ENCODE measurements at regions of chr11 and their contacts with region 1.

Region 1: DNA sequence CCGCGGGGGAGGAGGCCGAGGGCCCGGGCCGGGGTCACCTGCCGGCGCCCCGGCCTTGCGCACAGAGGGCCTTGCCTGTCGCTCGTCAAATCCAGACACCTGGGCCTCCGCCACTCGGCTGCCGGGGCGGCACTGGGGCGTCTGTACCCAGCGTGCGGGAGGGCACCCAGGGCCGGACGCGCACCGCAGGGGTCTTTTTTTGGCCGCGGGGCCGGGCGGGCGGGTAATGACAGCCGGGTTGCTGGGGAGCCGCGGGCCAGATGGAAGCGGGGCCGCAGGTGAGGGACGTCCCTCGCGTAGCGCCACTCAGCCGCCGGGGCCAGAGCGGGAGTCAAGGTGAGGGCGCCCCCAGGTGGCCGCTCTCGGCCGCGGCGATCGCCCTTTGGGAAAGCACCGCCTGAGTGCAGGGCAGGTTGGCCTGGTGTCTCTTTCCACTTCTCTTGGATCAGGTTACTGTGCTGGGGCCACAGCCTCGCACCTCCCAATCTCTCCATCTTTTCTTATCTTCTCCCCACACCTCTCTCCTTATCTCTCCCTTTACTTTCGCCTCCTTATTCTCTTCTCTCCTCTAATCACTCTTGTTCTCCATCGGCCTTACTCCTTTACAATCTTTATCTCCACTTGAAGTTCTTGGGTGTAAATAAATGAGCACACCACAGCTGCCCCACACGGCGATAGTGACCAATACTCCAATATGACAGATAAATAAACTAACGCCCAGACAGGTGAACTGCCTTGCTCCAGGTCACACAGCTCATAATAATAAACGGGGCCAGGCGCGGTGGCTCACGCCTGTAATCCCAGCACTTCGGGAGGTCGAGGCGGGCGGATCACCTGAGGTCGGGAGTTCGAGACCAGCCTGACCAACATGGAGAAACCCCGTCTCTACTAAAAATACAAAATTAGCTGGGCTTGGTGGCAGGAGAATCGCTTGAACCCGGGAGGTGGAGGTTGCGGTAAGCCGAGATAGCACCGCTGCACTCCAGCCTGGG is 3.7 kb downstream of the PHLDB1 start:
- DNase-seq: peak; percentile 72 to 91 (median 76)
- ATAC-seq: peak; percentile 81
- H3K4me3 ChIP-seq: no peak overlapping the region
- H3K27ac ChIP-seq: peak overlapping the region; percentile 38; the same call in 1 of the 3 replicates
- H3K4me1 ChIP-seq: peaks cover 21 to 51% of the 10 kb centered on the region in 2 experiments
- H3K27me3 ChIP-seq: no peaks in the 10 kb centered on the region
- CTCF ChIP-seq: peak; percentile 88 to 97 (median 92)
- EP300 ChIP-seq: peak; percentile 52
- POLR2A ChIP-seq: no peak
- RAD21 ChIP-seq: peak; percentile 66 to 90

Region 2: GRCh38 chr11:118621071-118621783 is 10.1 kb after region 1 on chr11:
- CTCF ChIA-PET with region 1: no interaction called
- POLR2A ChIA-PET with region 1: interaction called, 21 read pairs
- in situ Hi-C with region 1: no loop called
- intact Hi-C with region 1: no loop called
- DNase-seq: peak; percentile 84 to 91 (median 90)
- ATAC-seq: peak; percentile 92
- H3K4me3 ChIP-seq: peak overlapping the region; percentile 60
- H3K27ac ChIP-seq: peak overlapping the region; percentile 70
- H3K4me1 ChIP-seq: peaks cover 28 to 44% of the 10 kb centered on the region in 2 experiments
- H3K27me3 ChIP-seq: no peaks in the 10 kb centered on the region
- CTCF ChIP-seq: no peak
- EP300 ChIP-seq: no peak
- POLR2A ChIP-seq: peak; percentile 65
- RAD21 ChIP-seq: no peak

Region 3: DNA sequence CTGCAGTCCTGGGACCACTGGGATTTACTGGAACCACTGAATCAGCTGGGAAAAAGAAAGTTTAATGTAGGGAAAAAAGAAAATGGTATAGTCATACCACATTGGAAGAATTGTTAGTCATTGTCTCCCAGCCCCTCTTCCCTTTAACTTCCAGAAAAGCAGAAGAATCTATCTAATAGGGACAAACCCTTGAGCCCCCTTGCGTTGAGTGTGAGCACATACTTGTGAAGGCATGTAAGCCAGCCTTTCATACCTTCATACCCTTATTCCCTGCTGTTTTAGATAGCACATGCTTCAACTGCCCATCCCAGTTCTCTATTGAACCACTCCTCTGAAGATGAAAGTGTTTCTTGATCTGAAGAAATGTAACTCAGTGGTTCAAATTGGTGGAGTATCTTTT is 61.7 kb after region 1 on chr11:
- CTCF ChIA-PET with region 1: no interaction called
- POLR2A ChIA-PET with region 1: no interaction called
- in situ Hi-C with region 1: no loop called
- intact Hi-C with region 1: no loop called
- DNase-seq: peak in 3 of 4 experiments; percentile 21 to 56 (median 34)
- ATAC-seq: peak; percentile 92
- H3K4me3 ChIP-seq: no peak overlapping the region
- H3K27ac ChIP-seq: no peak overlapping the region
- H3K4me1 ChIP-seq: no peaks in the 10 kb centered on the region
- H3K27me3 ChIP-seq: peaks cover 0 to 4% of the 10 kb centered on the region in 2 experiments; a peak in 1 of 5 replicates
- CTCF ChIP-seq: peak; percentile 45 to 48 (median 47); a peak in 4 of 6 replicates
- EP300 ChIP-seq: no peak
- POLR2A ChIP-seq: no peak
- RAD21 ChIP-seq: peak in 1 of 2 experiments; percentile 43; a peak in 2 of 4 replicates